Left colon (tissue), 2 donors: ENCODE measurements at regions of chr18 and their contacts with region 1.

Region 1: GRCh38 chr18:51383116-51383515 is 185.6 kb upstream of the MEX3C start:
- DNase-seq: no peak
- ATAC-seq: no peak

Region 2: DNA sequence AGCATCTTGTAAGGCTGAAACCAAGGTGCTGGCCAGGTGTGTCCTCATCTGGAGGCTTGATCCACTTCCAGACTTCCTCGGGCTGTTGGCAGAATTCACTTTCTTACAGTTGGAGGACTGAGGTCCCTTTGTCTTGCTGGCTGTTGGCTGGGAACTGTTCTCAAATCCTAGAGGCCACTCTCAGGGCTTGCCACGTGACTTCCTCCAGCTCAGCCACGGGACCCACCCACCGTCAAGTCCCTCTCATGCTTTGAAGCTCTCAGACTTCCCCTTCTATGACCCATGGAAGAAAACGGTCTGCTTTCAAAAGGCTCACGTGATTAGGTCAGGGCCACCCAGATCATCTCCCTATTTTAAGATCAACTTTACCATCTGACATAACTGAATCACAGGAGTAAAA is 276.0 kb before region 1 on chr18:
- intact Hi-C with region 1: loop called in 1 of 2 experiments (anchors 10 kb)
- DNase-seq: no peak
- ATAC-seq: no peak

Region 3: DNA sequence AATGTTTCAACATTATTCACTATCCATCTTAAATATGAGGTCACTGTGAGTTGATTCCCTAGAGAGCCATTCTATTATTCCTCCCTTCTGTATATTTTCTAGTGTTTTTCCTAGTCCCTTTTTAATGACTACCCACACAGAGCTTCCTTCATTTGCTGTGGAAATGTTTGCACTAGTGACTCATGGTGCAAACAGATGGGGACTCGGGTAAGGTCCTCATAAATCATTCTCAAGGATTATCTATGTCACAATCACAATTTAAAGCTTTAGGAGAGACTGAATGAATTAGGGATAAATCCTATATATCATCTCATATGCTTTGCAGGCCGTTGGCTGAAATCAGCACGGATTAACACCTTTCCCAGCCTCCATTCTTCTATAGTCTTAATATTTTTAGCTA is 1116.5 kb after region 1 on chr18:
- intact Hi-C with region 1: no loop called
- DNase-seq: no peak
- ATAC-seq: peak; percentile 84